GM12878 (cell line): ENCODE measurements at regions of chr16 and their contacts with region 1.

Region 1: DNA sequence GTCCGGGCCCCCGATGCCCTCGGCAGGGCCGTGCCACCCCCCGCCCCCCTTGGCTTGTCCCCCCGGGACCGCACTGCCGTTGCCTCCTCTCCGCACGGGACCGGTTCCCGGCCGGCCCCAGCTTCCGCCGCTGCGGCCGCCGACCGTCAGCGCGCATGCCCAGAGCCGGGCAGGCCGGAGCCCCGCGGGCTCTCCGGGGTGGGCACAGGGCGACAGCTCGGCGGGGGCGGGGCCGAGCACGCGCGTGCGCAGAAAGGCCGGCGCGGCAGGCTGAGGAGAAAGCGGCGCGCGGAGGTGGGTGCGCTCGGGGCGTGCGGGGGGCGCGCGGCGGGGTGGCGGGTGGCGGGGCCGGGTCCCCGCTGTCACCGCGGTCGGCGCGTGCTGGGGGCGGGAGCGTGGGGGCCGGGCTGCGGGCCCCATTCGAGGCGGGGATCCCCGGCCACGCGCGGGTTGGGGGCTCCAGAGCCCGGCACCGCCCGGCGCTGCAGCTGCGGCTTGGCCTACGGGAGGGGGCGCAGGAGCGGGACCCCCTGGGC is at the start of gene TBC1D24:
- DNase-seq: no peak
- ATAC-seq: peak; percentile 89
- H3K4me3 ChIP-seq: peak within 1 kb of the TSS; percentile 78
- H3K27ac ChIP-seq: peak within 1 kb of the TSS; percentile 66; the same call in 1 of the 2 replicates
- H3K4me1 ChIP-seq: peaks cover 12% of the 10 kb centered on the region
- H3K27me3 ChIP-seq: peaks cover 0 to 2% of the 10 kb centered on the region in 2 experiments; a peak in 1 of 4 replicates
- CTCF ChIP-seq: no peak
- EP300 ChIP-seq: no peak
- POLR2A ChIP-seq: peak; percentile 79
- RAD21 ChIP-seq: no peak
- polyA plus RNA-seq, gene TBC1D24: 1.1 to 1.5 TPM

Region 2: GRCh38 chr16:2236337-2237101 is 238.4 kb before region 1 on chr16 and contains the start of gene DNASE1L2:
- CTCF ChIA-PET with region 1: no interaction called
- POLR2A ChIA-PET with region 1: no interaction called
- RAD21 ChIA-PET with region 1: no interaction called
- SMC1A ChIA-PET with region 1: no interaction called
- in situ Hi-C with region 1: no loop called
- intact Hi-C with region 1: no loop called
- DNase-seq: no peak
- ATAC-seq: peak; percentile 12; the same call in 1 of the 3 replicates
- H3K4me3 ChIP-seq: no peak within 1 kb of the TSS
- H3K27ac ChIP-seq: no peak within 1 kb of the TSS
- H3K4me1 ChIP-seq: no peaks in the 10 kb centered on the region
- H3K27me3 ChIP-seq: no peaks in the 10 kb centered on the region
- CTCF ChIP-seq: no peak
- EP300 ChIP-seq: no peak
- POLR2A ChIP-seq: no peak; the same call in 1 of the 2 replicates
- RAD21 ChIP-seq: no peak
- polyA plus RNA-seq, gene DNASE1L2: 0.10 to 0.13 TPM

Region 3: GRCh38 chr16:2459647-2460390 is 15.1 kb before region 1 on chr16 and contains the start of gene TEDC2:
- CTCF ChIA-PET with region 1: interaction called, 3 read pairs
- POLR2A ChIA-PET with region 1: interaction called, 13 read pairs
- RAD21 ChIA-PET with region 1: interaction called, 8 read pairs
- SMC1A ChIA-PET with region 1: no interaction called
- in situ Hi-C with region 1: no loop called
- intact Hi-C with region 1: no loop called
- DNase-seq: peak; percentile 66
- ATAC-seq: peak; percentile 99
- H3K4me3 ChIP-seq: peak within 1 kb of the TSS; percentile 73
- H3K27ac ChIP-seq: peak within 1 kb of the TSS; percentile 31; the same call in 1 of the 2 replicates
- H3K4me1 ChIP-seq: peaks cover 8% of the 10 kb centered on the region; the same call in 1 of the 2 replicates
- H3K27me3 ChIP-seq: no peaks in the 10 kb centered on the region
- CTCF ChIP-seq: no peak
- EP300 ChIP-seq: no peak
- POLR2A ChIP-seq: peak; percentile 58; the same call in 1 of the 2 replicates
- RAD21 ChIP-seq: no peak
- polyA plus RNA-seq, gene TEDC2: 0.23 to 2.5 TPM

Region 4: DNA sequence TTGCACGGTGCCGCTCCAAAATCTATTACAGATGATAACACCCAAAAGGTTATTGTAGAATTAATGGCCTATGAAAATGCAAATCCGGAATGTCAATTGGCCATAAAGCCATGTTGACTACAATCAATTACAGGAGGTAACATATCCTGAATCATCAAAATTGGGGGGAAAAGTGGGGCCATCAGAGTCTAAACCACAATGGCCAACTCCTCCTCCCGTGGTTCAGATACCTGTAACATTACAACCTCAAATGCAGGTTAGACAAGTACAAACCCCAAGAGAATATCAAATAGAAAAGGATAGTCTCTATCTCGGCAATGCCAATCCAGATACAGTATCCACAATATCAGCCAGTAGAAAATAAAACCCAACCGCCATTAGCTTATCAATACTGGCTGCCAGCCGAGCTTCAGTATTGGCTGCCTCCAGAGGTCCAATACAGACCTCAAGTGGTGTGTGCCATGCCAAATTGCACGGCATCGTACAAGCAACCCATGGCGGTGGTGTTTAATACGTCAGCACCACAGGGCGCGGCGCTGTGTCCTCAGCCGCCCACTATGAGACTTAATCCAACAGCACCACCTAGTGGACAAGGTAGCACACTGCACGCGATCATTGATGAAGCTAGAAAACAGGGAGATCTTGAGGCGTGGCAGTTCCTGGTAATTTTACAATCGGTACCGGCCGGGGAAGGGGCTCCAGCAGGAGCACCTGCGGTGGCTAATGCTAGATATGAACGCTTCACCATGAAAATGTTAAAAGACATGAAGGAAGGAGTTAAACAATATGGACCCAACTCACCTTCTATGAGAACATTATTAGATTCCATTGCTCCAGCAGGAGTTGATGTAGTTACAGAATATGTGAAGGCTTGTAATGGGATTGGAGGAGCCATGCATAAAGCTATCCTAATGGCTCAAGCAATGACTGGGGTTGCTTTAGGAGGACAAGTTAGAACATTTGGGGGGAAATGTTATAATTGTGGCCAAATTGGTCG is 452.0 kb after region 1 on chr16:
- CTCF ChIA-PET with region 1: no interaction called
- POLR2A ChIA-PET with region 1: no interaction called
- RAD21 ChIA-PET with region 1: no interaction called
- SMC1A ChIA-PET with region 1: no interaction called
- in situ Hi-C with region 1: no loop called
- intact Hi-C with region 1: no loop called
- DNase-seq: no peak
- ATAC-seq: peak; percentile 100
- H3K4me3 ChIP-seq: no peak overlapping the region
- H3K27ac ChIP-seq: no peak overlapping the region
- H3K4me1 ChIP-seq: no peaks in the 10 kb centered on the region
- H3K27me3 ChIP-seq: no peaks in the 10 kb centered on the region
- CTCF ChIP-seq: peak; percentile 89 to 95 (median 93)
- EP300 ChIP-seq: no peak
- POLR2A ChIP-seq: no peak
- RAD21 ChIP-seq: peak; percentile 66